Dendritic cell treated with granulocyte-macrophage colony-stimulating factor and Interleukin-4, amounts not matched to agents 40 ng/mL and 50 ng/mL, for 4 days (primary cell): ENCODE measurements at regions of chr2 and their contacts with region 1.

Region 1: GRCh38 chr2:49857371-49858112 is 703.2 kb upstream of the FSHR start:
- H3K4me3 Mint-ChIP-seq: no peak overlapping the region
- H3K27ac Mint-ChIP-seq: no peak overlapping the region
- H3K4me1 Mint-ChIP-seq: no peaks in the 10 kb centered on the region
- H3K27me3 Mint-ChIP-seq: no peaks in the 10 kb centered on the region

Region 2: DNA sequence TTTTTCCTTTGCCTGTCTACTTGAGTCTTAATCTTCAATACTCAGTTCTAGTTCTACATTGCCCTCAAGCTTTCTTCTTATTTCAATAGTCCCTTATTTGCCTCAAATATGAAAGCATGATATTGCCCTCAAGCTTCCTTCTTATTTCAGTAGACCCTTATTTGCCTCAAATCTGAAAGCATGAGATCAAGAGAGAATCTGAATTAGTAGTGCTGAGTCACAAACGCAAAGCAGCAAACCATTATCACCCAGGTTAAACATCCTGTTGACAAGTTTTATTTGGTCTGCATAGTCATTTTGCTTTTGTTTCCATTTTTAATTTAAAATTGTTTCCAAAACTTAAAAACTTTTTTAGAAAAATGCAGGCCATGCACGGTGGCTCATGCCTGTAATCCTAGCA is 119.9 kb before region 1 on chr2:
- intact Hi-C with region 1: no loop called
- H3K4me3 Mint-ChIP-seq: no peak overlapping the region
- H3K27ac Mint-ChIP-seq: no peak overlapping the region
- H3K4me1 Mint-ChIP-seq: no peaks in the 10 kb centered on the region
- H3K27me3 Mint-ChIP-seq: no peaks in the 10 kb centered on the region

Region 3: DNA sequence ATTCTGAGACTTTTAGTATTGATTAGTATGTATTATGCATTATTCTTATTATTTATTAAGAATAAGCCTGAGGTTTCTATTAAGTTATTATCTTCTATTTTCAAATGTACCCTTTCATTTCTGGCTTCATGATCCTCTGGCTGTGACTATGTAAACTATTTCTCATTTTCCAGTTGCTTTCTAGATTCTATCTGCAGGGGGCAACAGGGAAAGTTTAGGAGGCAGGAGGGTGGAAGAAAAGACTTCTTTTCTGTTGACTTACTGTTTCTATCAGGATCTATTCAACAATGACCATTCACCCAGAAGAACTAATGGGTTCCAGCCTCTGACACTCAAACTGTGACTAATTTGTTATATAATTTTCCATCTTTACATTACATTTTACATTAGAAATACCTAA is 49.9 kb before region 1 on chr2:
- intact Hi-C with region 1: no loop called
- H3K4me3 Mint-ChIP-seq: no peak overlapping the region
- H3K27ac Mint-ChIP-seq: no peak overlapping the region
- H3K4me1 Mint-ChIP-seq: no peaks in the 10 kb centered on the region
- H3K27me3 Mint-ChIP-seq: no peaks in the 10 kb centered on the region

Region 4: GRCh38 chr2:50108245-50108644 is 250.7 kb after region 1 on chr2:
- intact Hi-C with region 1: loop called (anchors 5 kb)
- H3K4me3 Mint-ChIP-seq: no peak overlapping the region
- H3K27ac Mint-ChIP-seq: no peak overlapping the region
- H3K4me1 Mint-ChIP-seq: no peaks in the 10 kb centered on the region
- H3K27me3 Mint-ChIP-seq: no peaks in the 10 kb centered on the region